ENCODE measurements at regions of chr11 and their contacts with region 1.

Region 1: DNA sequence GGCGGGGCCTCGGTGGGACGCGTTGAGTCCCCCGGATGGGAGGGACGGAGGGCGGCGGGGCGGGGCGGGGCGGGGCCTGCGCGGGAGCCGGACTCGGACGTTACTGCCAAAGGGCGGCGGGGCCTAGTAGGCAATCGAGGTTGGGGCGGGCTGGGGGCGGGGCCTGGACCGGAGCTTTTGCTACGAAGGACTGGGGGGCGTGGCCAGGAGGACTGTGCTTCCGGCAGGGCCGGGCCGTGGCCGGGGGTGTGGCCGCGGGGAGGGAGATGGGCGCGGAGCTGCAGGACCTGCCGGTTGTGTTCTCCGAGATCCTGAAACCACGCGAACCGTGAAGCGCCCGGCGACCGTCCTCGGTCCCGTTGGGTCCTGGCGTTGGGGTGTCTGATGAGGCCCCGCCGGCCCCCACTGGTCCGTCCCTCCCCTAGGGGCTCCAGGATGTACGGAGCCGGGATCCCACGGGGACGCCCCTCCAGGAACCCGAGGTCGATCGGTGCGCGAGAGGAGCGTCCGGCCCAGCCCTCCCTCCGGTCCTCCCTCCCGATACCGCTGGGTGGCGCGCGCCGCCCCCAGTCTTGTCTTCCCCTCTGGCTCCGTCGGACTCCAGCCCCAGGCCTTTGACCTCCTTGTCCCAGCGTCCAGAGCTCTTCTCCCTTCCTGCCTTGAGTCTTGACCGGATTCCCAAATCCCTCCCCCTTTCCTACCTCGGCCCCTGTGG is 648 bp upstream of the NUDT8 start:
- DNase-seq: peak; percentile 99
- H3K4me3 ChIP-seq: peak overlapping the region; percentile 61
- H3K27ac ChIP-seq: peak overlapping the region; percentile 64
- H3K4me1 ChIP-seq: peaks cover 11% of the 10 kb centered on the region
- H3K27me3 ChIP-seq: no peaks in the 10 kb centered on the region
- CTCF ChIP-seq: peak; percentile 73

Region 2: DNA sequence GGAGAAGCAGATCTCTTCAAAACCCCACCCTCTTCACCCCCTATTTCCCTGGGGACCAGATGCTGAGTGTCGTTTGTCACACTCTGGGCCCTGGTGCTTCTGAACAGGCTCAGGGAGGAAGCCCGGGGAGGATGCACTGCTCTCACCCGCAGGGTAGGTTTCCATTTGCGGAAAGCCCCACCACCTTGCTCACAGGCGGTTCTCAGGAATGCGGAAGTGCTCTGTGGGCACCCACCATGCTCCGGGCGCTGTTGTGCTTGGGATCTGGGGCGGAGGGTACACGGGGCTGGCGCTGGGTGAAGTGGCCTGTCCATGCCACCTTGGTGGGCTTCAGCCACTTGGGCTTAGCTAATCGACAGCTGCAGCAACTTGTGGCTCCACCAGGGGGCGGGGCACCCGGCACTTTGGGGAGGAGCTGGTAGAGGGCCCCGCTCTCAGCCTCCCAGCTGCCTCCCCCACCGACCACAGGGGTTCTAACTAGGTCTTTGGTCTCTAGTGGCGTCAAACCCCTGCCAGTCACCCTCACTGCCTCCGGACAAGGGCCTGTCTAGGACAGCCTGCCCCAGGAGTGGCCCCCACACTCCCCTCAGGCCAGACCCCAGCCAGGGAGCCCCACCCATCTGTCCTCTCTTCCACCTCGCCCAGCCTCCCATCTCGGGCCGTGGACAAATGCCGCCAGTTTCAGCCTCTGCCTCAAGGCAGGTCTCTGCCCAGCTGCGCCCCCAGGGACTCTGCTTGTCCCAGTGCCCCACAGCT is 16.2 kb before region 1 on chr11:
- CTCF ChIA-PET with region 1: interaction called, 16 read pairs
- POLR2A ChIA-PET with region 1: interaction called, 5 read pairs
- intact Hi-C with region 1: no loop called
- DNase-seq: peak; percentile 79
- H3K4me3 ChIP-seq: peak overlapping the region; percentile 14
- H3K27ac ChIP-seq: no peak overlapping the region
- H3K4me1 ChIP-seq: peaks cover 4% of the 10 kb centered on the region
- H3K27me3 ChIP-seq: no peaks in the 10 kb centered on the region
- CTCF ChIP-seq: peak; percentile 82

Region 3: GRCh38 chr11:68950268-68950667 is 1319.9 kb after region 1 on chr11:
- CTCF ChIA-PET with region 1: no interaction called
- POLR2A ChIA-PET with region 1: no interaction called
- intact Hi-C with region 1: no loop called
- DNase-seq: peak; percentile 38
- H3K4me3 ChIP-seq: no peak overlapping the region
- H3K27ac ChIP-seq: no peak overlapping the region
- H3K4me1 ChIP-seq: no peaks in the 10 kb centered on the region
- H3K27me3 ChIP-seq: no peaks in the 10 kb centered on the region
- CTCF ChIP-seq: peak; percentile 46